GM10248 (cell line): ENCODE measurements at regions of chr9 and their contacts with region 1.

Region 1: DNA sequence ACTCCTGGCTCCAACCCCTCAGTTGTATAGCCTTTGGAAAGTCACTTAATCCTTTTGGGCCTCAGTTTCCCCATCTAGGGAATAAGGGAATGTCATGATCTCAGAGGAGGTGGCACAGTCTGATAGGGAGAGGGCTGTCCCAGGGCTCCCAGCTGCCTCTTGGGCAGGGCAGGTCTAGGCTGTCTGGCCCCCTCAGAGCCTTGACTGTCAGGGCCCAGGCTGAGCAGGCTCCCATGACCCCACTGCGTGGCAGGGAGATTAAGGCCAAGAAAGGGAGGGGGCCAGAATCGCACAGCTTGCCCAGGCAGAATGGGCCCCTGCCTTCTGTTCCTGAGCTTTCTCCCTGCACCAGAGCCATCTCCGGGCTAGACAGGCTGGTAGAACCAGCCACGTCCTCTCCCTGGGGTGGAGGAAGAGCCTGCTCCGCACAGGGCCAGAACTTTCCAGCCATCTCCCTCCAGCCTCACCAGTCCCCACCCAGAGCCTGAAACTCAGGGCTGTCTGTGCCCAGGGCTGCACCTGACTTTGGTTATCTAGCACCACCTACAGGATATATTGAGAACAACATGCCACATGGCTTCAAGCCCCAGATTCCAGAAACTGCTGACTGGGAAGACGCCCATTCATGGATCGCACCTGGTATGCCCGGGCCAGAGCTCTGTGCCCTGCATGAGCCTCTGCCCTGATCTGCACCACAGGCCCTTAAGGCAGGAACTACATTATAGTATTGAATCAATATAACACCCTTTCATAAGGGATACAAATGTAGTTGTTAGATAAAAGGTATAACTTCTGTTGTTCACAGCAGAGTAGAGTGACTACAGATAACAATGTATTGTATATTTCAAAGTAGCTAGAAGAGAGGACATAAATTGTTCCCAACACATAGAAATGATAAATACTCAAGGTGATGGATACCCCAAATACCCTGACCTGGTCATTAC is 32.0 kb downstream of the NAIF1 start:
- DNase-seq: peak; percentile 82
- CTCF ChIP-seq: peak; percentile 77

Region 2: GRCh38 chr9:127862075-127863011 is 172.8 kb before region 1 on chr9:
- CTCF ChIA-PET with region 1: no interaction called
- POLR2A ChIA-PET with region 1: no interaction called
- DNase-seq: peak; percentile 54
- CTCF ChIP-seq: no peak

Region 3: GRCh38 chr9:127970401-127971313 is 64.4 kb before region 1 on chr9:
- CTCF ChIA-PET with region 1: interaction called, 24 read pairs
- POLR2A ChIA-PET with region 1: no interaction called
- DNase-seq: peak; percentile 94
- CTCF ChIP-seq: no peak

Region 4: DNA sequence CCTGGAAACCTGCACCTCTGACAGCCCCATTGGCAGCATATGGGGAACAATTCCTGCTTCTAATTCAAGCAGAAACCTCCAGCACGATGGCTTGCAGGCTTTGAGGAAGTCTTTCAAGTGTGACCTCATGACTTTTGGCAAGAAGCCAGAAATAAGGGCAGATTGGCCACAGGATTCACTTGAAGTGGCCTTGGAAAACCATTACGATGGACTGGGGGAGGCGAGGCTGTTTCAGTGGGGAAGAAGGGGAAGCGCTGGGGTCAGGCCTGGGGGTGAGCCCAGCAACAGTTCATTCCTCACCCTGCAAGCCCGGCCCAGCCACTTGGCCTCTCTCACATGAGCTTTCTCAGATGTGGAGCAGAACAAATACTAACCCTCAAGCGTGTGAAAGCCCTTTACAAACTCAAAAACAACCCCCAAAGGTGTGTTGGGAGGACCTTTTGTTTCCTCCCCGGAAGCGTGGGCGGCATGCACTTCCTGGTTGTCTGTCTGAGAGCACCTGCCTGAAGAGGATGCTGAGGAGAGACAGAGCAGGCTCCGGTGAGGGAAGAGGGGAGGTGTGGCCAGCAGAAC is 27.4 kb before region 1 on chr9:
- CTCF ChIA-PET with region 1: interaction called, 13 read pairs
- POLR2A ChIA-PET with region 1: no interaction called
- DNase-seq: peak; percentile 78
- CTCF ChIP-seq: no peak

Region 5: GRCh38 chr9:128048663-128049062 is 13.6 kb after region 1 on chr9:
- CTCF ChIA-PET with region 1: interaction called, 15 read pairs
- POLR2A ChIA-PET with region 1: no interaction called
- DNase-seq: no peak
- CTCF ChIP-seq: no peak

Region 6: GRCh38 chr9:128081056-128081455 is 46.0 kb after region 1 on chr9:
- CTCF ChIA-PET with region 1: interaction called, 10 read pairs
- POLR2A ChIA-PET with region 1: no interaction called
- DNase-seq: no peak
- CTCF ChIP-seq: no peak

Region 7: DNA sequence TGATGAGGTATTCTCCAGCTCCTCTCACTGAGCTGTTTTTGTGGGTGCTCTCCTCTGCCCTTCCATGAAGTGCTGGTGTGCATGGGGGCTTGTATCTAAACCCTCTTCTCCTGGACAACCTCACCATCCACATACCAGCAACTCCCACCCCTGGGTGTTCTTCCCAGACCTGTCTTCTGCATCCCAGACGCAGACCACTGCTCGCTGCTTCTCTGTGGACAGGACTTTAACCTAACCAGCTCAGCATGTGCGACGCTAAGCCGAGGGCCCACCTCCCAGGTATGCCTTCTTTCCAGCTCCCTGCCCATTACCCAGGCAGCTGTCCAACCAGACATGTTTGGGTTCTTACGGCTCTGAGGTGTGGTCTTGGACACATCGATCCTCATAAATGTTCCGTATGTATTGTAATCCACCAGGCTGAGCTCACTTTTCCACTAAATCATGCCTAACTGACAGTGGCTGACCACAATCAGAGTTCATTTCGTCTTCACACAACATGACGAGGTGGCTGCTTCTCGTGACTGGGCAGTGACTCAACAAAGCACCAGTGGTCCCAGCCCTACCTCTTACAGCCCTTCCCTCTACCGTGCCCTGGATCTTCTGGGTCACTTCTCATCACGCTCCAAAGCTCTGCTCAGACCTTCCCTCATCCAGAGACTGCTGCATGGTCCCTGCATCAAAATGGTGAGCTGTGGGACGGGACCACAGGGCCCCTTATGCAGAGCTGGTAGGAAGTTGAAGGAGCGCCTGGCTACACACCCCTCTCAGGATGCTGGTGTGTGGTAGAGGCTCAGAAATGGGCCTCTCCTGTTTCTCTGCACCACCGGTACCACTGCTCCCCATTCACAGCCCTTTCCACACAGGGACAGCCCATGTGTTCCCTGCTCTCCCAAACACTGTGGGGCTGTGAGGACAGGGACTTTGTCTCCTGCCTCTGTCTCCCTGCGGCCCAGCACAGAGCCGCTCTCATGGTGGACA is 102.0 kb after region 1 on chr9:
- CTCF ChIA-PET with region 1: no interaction called
- POLR2A ChIA-PET with region 1: no interaction called
- DNase-seq: no peak
- CTCF ChIP-seq: no peak

Region 8: GRCh38 chr9:128175102-128175563 is 140.0 kb after region 1 on chr9:
- CTCF ChIA-PET with region 1: no interaction called
- POLR2A ChIA-PET with region 1: no interaction called
- DNase-seq: no peak
- CTCF ChIP-seq: no peak